Activated CD4-positive, alpha-beta T cell treated with anti-CD3 and anti-CD28 coated beads for 36 hours (primary cell): ENCODE measurements at regions of chr10 and their contacts with region 1.

Region 1: DNA sequence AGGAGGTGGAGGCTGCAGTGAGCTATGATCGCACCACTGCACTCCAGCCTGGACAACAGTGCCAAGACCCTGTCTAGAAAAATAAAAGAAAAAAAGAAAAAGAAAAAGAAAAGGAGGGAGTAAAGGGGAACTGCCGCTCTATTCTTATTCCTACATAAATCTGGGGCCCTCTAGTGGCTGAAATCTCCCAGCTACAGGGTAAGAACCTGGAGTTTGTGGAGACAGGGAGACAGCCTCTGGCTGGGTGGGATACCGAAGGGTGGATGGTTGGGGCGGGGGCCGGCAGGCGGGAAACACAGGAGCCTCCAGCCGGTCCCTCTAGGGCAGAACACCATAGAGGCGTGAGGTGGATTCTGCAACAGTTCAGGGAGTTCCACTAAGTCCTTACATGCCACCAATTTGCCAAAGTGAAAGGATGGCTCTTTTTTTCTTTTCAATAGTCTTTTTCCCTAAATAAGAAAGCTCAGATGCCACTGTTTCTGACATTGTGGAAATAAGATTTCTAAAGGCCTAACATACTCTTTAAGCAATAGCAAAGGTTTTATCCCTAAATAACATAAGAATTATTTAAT is 117.3 kb downstream of the SVIL start:
- DNase-seq: peak; percentile 26
- ATAC-seq: no peak
- H3K4me3 Mint-ChIP-seq: no peak overlapping the region
- H3K27ac Mint-ChIP-seq: no peak overlapping the region
- H3K4me1 Mint-ChIP-seq: no peaks in the 10 kb centered on the region
- H3K27me3 Mint-ChIP-seq: no peaks in the 10 kb centered on the region

Region 2: GRCh38 chr10:29317027-29317420 is 200.4 kb before region 1 on chr10:
- CTCF ChIA-PET with region 1: no interaction called
- POLR2A ChIA-PET with region 1: no interaction called
- intact Hi-C with region 1: no loop called
- DNase-seq: no peak
- ATAC-seq: no peak
- H3K4me3 Mint-ChIP-seq: no peak overlapping the region
- H3K27ac Mint-ChIP-seq: no peak overlapping the region
- H3K4me1 Mint-ChIP-seq: peaks cover 9% of the 10 kb centered on the region
- H3K27me3 Mint-ChIP-seq: peaks cover 15% of the 10 kb centered on the region

Region 3: DNA sequence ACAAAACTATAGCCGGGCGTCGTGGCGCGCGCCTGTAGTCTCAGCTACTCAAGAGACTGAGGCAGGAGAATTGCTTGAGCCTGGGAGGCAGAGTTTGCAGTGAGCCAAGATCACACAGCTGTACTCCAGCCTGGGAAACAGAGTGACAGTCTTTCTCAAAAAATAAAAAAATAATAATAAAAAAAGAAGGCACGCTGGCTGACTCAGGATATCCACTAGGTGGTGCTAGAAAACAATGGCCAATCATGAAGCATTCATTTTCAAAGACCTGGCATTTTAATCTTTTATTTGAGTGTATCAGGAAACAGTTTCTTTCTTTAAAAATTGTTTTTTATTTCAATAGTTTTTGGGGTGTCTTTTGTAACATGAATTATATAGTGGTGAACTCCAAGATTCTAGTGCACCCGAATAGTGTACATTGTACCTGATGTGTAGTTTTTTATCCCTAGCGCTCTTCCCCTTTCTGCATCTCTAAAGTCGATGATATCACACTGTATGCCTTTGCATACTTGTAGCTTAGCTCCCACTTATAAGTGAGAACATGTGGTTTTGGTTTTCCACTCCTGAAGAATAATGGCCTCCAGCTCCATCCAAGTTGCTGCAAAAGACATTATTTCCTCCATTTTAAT is 140.0 kb before region 1 on chr10:
- CTCF ChIA-PET with region 1: interaction called, 3 read pairs
- POLR2A ChIA-PET with region 1: no interaction called
- intact Hi-C with region 1: loop called in 1 of 2 experiments (anchors 1 kb)
- DNase-seq: no peak
- ATAC-seq: peak; percentile 12
- H3K4me3 Mint-ChIP-seq: no peak overlapping the region
- H3K27ac Mint-ChIP-seq: no peak overlapping the region
- H3K4me1 Mint-ChIP-seq: peaks cover 8% of the 10 kb centered on the region
- H3K27me3 Mint-ChIP-seq: peaks cover 5% of the 10 kb centered on the region

Region 4: DNA sequence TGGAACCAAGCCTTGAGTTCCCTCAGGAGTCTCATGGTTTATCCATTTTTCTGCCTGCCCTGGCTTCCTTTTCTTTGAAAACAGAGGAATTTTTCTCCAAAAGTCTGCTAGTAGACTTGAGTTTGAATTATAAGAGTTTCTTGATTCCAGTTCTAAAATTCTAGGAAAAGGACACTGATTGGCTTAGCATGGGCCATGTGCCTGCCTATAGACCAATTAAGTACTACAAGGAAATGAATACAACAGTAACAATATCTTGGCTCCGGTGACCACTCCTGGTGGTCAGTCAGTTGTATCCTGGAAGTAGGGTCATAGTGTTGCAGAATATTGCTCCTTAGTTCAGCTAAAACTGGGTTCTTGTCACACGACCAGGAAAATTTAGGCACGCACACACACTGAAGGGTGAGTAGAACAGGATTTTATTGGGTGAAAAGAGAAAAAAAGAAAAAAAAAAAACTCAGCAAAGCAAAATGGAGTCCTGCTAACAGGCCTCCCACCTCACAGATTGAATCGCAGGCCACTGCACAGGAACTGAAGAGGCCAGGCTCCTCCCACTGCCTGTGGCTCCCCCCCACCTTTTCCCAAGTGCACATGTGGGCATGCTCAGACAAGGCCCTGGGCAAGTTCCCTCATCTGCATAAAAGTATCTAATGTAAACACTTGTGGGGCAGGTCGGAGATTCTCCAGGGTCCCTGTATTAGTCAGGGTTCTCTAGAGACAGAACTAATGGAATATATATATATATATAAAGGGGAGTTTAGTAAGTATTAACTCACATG is 73.5 kb before region 1 on chr10:
- CTCF ChIA-PET with region 1: no interaction called
- POLR2A ChIA-PET with region 1: no interaction called
- intact Hi-C with region 1: loop called in 1 of 2 experiments (anchors 5 kb)
- DNase-seq: peak; percentile 21
- ATAC-seq: no peak
- H3K4me3 Mint-ChIP-seq: no peak overlapping the region
- H3K27ac Mint-ChIP-seq: no peak overlapping the region
- H3K4me1 Mint-ChIP-seq: peaks cover 12% of the 10 kb centered on the region
- H3K27me3 Mint-ChIP-seq: no peaks in the 10 kb centered on the region

Region 5: GRCh38 chr10:29502351-29502750 is 15.1 kb before region 1 on chr10:
- CTCF ChIA-PET with region 1: interaction called, 10 read pairs
- POLR2A ChIA-PET with region 1: no interaction called
- intact Hi-C with region 1: no loop called
- DNase-seq: no peak
- ATAC-seq: no peak
- H3K4me3 Mint-ChIP-seq: no peak overlapping the region
- H3K27ac Mint-ChIP-seq: no peak overlapping the region
- H3K4me1 Mint-ChIP-seq: no peaks in the 10 kb centered on the region
- H3K27me3 Mint-ChIP-seq: no peaks in the 10 kb centered on the region

Region 6: DNA sequence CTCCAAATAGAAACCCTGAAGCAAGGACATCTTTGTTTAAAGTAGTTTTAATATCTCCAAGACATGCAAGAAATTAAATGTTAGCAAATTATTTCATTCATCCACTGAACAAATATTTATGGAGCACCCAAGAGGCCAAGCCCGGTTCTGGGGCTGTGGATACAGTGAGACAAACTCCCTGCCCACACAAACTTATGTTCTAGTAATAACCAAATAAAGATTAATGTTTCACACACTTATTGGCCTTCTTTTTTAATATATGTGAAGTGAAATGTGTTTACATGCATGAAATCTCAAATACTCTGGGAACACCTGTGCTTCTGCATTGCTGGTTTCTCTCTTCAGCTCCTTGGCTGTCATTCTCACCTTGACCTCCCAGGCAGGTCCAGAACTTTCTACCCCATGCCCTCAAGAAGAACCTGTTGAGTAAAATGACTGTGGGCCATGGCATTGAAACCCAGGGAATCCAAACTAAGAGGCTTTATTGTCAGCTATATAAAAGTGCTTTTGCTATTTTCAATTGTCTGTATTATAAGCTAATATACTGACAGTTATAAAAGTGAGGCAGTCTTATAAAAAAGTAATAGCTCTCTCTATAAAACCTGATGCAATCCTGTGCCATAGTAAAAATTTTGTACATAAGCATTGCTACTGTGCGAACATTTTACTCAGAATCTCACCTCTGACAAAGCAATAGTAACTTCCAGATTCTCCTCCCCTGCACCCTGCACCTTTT is 73.6 kb after region 1 on chr10:
- CTCF ChIA-PET with region 1: interaction called, 6 read pairs
- POLR2A ChIA-PET with region 1: no interaction called
- intact Hi-C with region 1: loop called (anchors 1 to 2 kb)
- DNase-seq: no peak
- ATAC-seq: no peak
- H3K4me3 Mint-ChIP-seq: peak overlapping the region; percentile 44
- H3K27ac Mint-ChIP-seq: peak overlapping the region; percentile 86
- H3K4me1 Mint-ChIP-seq: peaks cover 18% of the 10 kb centered on the region
- H3K27me3 Mint-ChIP-seq: no peaks in the 10 kb centered on the region